Motor neuron (in vitro differentiated cells): ENCODE measurements at regions of chr11 and their contacts with region 1.

Region 1: GRCh38 chr11:48354677-48355076 is 11.6 kb downstream of the OR4C5 start:
- ATAC-seq: no peak
- H3K4me3 ChIP-seq: no peak overlapping the region
- H3K27ac ChIP-seq: no peak overlapping the region
- H3K4me1 ChIP-seq: no peaks in the 10 kb centered on the region

Region 2: DNA sequence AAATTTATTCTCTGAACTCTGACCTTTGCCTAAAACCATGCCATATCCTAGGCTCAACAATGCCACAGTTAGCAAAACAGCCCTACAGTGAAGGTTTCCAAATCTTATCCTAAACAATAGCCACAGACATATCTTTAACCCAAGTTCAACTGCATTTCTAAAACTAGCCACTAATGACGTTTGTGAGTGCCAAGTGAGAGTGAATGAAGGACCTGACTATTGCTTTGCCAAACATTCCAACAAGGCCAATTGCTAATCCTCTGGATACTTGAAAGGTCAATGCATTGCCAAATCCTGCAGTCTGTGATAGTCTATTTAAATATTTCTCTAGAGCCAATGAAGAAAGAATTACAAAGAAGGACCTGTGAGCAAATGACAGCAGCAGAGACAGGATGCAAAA is 1675.5 kb after region 1 on chr11:
- in situ Hi-C with region 1: loop called in 1 of 9 experiments (anchors 5 kb)
- ATAC-seq: no peak
- H3K4me3 ChIP-seq: no peak overlapping the region
- H3K27ac ChIP-seq: no peak overlapping the region
- H3K4me1 ChIP-seq: no peaks in the 10 kb centered on the region